MCF 10A (cell line): ENCODE measurements at regions of chr7 and their contacts with region 1.

Region 1: GRCh38 chr7:5441840-5442503 is 18.3 kb upstream of the TNRC18 start:
- DNase-seq: no peak
- H3K4me3 Mint-ChIP-seq: no peak overlapping the region
- H3K27ac Mint-ChIP-seq: peak overlapping the region; percentile 44
- H3K4me1 Mint-ChIP-seq: no peaks in the 10 kb centered on the region
- H3K27me3 Mint-ChIP-seq: no peaks in the 10 kb centered on the region
- CTCF ChIP-seq: no peak

Region 2: DNA sequence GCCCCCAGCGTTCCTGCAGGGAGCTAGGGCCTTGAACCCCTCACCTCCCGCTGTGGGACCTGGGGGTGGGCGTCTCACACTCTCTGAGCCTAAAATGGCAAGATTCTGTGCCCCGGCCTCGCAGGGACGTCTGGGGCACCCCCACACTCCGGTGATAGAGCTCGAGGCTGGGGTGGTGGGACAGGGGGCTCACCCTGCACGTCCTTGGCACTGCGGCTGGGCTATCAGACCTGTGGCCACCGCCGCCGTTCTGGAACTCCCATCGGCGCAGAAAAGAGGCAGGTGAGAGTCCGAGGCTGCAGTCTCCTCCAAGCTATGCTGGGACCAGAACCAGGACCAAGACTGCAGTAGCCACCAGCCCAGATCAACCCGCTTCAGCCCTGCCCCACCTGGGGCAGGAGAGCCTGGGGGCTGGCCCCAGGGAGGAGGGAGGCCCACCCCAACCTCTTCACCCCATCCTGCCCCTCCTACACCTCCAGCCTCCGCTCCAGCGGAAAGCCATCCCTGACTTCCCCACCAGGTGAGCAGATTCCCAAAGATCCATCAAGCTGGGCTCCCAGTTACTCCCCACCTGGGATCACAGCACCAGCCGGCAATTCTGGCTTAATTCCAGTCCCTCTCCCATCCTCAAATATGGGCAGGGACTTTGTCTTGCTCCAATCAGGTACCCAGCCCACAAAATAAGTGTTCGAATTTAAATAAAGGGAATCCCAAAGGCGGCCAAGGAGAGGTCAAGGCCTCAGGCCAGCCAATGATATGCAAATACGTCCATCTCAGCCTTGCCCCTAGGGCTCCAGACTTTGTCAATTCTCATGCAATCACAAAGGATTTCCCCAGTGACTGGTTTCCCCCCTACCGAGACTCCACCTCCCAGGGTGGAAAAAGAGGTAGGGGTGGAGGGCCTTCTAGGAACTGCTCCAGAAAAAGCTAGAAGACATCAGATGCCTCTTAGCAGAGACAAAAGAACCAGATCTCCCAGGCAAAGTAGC is 34.7 kb before region 1 on chr7:
- CTCF ChIA-PET with region 1: no interaction called
- POLR2A ChIA-PET with region 1: no interaction called
- intact Hi-C with region 1: no loop called
- DNase-seq: no peak
- H3K4me3 Mint-ChIP-seq: no peak overlapping the region
- H3K27ac Mint-ChIP-seq: no peak overlapping the region
- H3K4me1 Mint-ChIP-seq: peaks cover 26% of the 10 kb centered on the region
- H3K27me3 Mint-ChIP-seq: no peaks in the 10 kb centered on the region
- CTCF ChIP-seq: no peak

Region 3: GRCh38 chr7:5423844-5424688 is 17.9 kb before region 1 on chr7:
- CTCF ChIA-PET with region 1: interaction called, 5 read pairs
- POLR2A ChIA-PET with region 1: interaction called, 11 read pairs
- intact Hi-C with region 1: no loop called
- DNase-seq: peak; percentile 99
- H3K4me3 Mint-ChIP-seq: peak overlapping the region; percentile 98
- H3K27ac Mint-ChIP-seq: peak overlapping the region; percentile 94
- H3K4me1 Mint-ChIP-seq: no peaks in the 10 kb centered on the region
- H3K27me3 Mint-ChIP-seq: no peaks in the 10 kb centered on the region
- CTCF ChIP-seq: no peak

Region 4: GRCh38 chr7:5429253-5429856 is 12.6 kb before region 1 on chr7:
- CTCF ChIA-PET with region 1: interaction called, 4 read pairs
- POLR2A ChIA-PET with region 1: interaction called, 24 read pairs
- intact Hi-C with region 1: no loop called
- DNase-seq: no peak
- H3K4me3 Mint-ChIP-seq: peak overlapping the region; percentile 98
- H3K27ac Mint-ChIP-seq: peak overlapping the region; percentile 94
- H3K4me1 Mint-ChIP-seq: peaks cover 21% of the 10 kb centered on the region
- H3K27me3 Mint-ChIP-seq: no peaks in the 10 kb centered on the region
- CTCF ChIP-seq: no peak

Region 5: GRCh38 chr7:5755704-5756504 is 313.9 kb after region 1 on chr7:
- CTCF ChIA-PET with region 1: no interaction called
- POLR2A ChIA-PET with region 1: no interaction called
- intact Hi-C with region 1: no loop called
- DNase-seq: peak; percentile 62
- H3K4me3 Mint-ChIP-seq: no peak overlapping the region
- H3K27ac Mint-ChIP-seq: no peak overlapping the region
- H3K4me1 Mint-ChIP-seq: no peaks in the 10 kb centered on the region
- H3K27me3 Mint-ChIP-seq: no peaks in the 10 kb centered on the region
- CTCF ChIP-seq: no peak